Stomach (tissue), 19 donors: ENCODE measurements at regions of chr12 and their contacts with region 1.

Region 1: DNA sequence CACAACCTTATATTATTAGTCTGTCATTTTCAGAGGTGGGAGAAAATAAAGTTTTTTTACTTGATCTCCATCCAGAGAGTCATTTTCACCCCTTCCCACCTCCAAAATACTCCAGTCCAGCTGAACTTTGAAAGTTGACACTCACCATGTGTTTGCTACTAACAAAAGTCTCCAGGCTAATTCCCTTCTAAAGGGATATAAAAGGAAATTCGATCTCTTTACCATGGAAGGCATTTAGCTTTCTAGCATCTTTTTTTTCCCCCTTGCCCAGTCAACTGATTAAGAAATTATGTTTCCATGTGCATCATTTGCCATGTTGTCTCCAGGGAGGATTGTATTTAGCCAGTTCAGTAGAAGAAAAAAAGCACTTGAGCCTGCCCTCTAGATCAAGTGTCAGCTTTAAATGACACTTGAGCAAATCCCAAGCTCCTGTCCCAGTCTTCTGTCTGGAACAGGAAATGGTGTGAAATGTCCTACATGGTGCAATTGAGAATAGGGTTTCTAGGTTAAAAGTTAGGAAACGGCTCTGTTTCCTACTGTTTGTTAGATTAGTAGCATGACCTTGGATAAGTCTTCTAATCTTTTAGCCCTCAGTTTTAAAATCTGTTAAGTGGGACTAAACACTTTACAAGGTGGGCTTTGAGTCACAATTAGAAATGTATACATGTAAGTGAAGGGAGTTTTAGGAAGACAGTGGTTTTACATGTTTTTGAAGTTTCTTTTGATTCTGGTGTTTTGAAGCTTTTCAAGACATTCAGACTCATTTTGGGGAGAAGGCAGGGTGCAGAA is 67.2 kb downstream of the GNS start:
- DNase-seq: no peak
- H3K4me3 ChIP-seq: no peak overlapping the region
- H3K27ac ChIP-seq: peak overlapping the region in 2 of 5 donors; percentile 27 to 39
- H3K4me1 ChIP-seq: peaks cover 9 to 68% (median 43%) of the 10 kb centered on the region in 4 donors
- H3K27me3 ChIP-seq: no peaks in the 10 kb centered on the region
- CTCF ChIP-seq: no peak
- EP300 ChIP-seq: no peak
- POLR2A ChIP-seq: no peak

Region 2: DNA sequence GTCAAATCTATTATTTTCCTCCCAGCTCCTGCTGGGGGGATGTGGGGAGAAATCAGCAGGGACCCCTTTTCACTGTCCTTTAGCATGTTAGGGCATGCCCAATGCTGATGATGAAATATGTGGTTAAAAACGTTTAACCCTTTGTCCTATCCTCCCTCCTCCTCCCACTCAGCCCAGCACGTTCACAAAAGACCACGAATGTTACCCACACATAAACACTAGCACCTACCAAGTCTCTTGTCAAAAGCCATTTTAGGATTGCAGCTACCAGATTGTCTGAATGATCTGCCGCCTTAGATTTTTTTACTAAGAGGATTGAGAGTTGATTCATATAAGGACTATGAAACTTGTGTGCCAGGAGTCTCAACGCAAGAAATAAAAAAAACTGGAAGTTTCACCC is 169.7 kb before region 1 on chr12:
- intact Hi-C with region 1: no loop called
- DNase-seq: no peak
- H3K4me3 ChIP-seq: no peak overlapping the region
- H3K27ac ChIP-seq: no peak overlapping the region
- H3K4me1 ChIP-seq: no peaks in the 10 kb centered on the region
- H3K27me3 ChIP-seq: no peaks in the 10 kb centered on the region
- CTCF ChIP-seq: no peak
- EP300 ChIP-seq: no peak
- POLR2A ChIP-seq: no peak

Region 3: DNA sequence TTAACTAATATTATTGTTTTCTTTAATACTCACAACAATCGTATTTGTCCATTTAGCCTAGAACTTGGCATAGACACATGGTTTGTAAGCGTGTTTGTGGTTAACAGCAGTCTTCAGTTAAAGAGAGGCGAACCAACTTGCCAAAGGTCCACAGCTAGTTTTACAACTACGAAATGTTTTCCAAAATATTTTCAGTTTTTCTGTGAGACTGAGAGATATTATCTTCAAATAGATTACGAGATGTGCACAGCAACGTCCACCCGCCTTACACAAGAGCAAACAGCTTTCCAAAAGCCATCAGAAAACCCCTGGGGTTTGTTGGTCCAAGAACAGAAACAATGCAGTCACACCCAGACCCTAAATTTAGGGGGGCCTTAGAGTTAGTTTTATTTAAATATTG is 140.3 kb before region 1 on chr12:
- intact Hi-C with region 1: loop called (anchors 5 kb)
- DNase-seq: no peak
- H3K4me3 ChIP-seq: no peak overlapping the region
- H3K27ac ChIP-seq: no peak overlapping the region
- H3K4me1 ChIP-seq: peaks cover 0 to 10% (median 4%) of the 10 kb centered on the region in 4 donors
- H3K27me3 ChIP-seq: no peaks in the 10 kb centered on the region
- CTCF ChIP-seq: no peak
- EP300 ChIP-seq: no peak
- POLR2A ChIP-seq: no peak